Natural killer cell (primary cell): ENCODE measurements at regions of chr11 and their contacts with region 1.

Region 1: DNA sequence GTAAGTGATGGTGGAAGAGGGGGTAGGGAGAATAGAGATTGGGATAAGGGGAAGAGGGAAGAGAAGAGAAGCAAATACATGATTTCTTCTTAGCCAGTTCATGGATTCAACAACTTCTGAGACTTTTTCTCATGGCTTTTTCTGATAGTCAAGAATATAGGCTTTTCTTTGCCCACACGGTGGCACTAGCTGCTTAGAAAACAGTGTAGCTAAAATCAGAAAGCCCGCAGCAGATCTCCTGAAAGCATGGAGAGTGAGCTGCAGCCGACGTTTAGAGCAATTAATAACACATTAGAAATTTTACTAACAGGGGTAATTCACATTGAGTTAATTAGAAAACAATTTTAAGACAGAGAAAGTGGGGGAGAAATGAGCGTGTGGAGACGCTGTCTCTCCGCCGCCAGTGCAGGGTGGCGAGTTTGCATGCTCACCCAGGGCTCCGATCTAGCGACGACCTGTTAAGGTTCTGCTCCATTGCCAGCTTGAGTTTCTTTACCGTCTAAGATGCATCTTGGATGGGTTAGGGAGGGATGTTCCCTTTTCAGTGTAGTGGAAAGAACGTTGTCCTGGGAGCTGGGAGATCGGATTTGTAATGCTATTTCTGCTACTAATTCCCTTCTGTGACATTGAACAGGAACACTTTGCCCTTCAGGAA is 3.3 kb upstream of the RAG1 start:
- DNase-seq: peak; percentile 35 to 75
- ATAC-seq: peak; percentile 64 to 92 (median 90)
- H3K4me3 ChIP-seq: peak overlapping the region; percentile 1
- H3K4me3 Mint-ChIP-seq: peak overlapping the region; percentile 91
- H3K27ac ChIP-seq: no peak overlapping the region
- H3K27ac Mint-ChIP-seq: peak overlapping the region in 1 of 2 donors; percentile 28
- H3K4me1 ChIP-seq: peaks cover 12% of the 10 kb centered on the region
- H3K4me1 Mint-ChIP-seq: peaks cover 28 to 30% of the 10 kb centered on the region in 2 donors
- H3K27me3 ChIP-seq: peaks cover 2% of the 10 kb centered on the region
- H3K27me3 Mint-ChIP-seq: peaks cover 11 to 16% of the 10 kb centered on the region in 2 donors
- CTCF ChIP-seq: peak; percentile 85

Region 2: DNA sequence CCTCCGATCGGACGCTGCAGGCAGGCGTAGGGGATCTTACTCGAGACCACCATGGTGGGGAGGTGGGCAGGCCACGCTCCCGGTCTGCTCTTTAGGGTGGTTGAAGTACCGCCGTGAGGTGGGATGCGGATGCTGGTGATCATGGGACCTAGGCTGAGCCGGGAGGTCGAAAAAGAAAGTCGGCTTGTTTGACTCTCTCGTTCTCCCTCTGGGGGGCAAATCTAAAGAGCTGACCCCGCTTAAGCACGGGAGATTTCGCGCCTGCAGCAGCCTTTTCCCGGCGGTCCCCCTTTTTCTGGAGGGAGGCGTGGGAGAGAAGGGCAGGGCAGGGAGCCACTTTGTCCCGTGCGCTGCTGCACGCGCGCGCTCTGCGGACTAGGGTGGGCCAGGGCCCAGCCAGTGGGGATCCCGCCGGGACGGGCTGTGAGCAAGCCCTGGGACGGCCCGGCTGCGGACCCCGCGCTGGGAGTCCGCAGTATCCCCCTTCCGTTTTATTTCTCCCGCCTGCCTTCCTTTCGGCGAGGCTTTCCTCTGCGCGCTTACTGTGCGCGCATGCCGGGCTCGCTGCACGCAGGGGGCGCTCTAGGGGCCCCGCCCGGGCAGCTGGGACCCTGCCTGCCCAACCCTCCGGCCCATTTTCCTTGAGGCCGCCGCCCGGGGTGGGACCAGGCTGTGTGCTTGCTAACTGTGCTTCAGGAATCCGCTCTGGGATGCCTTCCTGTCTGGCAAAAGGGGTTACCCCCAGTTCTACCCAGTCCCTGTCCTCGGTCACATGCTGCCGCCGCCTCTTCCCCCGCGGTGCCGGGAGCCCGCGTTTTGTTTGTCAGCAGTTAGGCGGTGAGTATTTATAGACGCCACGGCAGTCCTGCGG is 187.4 kb before region 1 on chr11:
- intact Hi-C with region 1: no loop called
- DNase-seq: peak; percentile 69 to 76
- ATAC-seq: peak; percentile 63 to 82 (median 72)
- H3K4me3 ChIP-seq: peak overlapping the region; percentile 72
- H3K4me3 Mint-ChIP-seq: peak overlapping the region; percentile 91
- H3K27ac ChIP-seq: peak overlapping the region; percentile 85
- H3K27ac Mint-ChIP-seq: peak overlapping the region; percentile 90 to 93
- H3K4me1 ChIP-seq: peaks cover 44% of the 10 kb centered on the region
- H3K4me1 Mint-ChIP-seq: peaks cover 60 to 63% of the 10 kb centered on the region in 2 donors
- H3K27me3 ChIP-seq: no peaks in the 10 kb centered on the region
- H3K27me3 Mint-ChIP-seq: no peaks in the 10 kb centered on the region
- CTCF ChIP-seq: peak; percentile 84

Region 3: DNA sequence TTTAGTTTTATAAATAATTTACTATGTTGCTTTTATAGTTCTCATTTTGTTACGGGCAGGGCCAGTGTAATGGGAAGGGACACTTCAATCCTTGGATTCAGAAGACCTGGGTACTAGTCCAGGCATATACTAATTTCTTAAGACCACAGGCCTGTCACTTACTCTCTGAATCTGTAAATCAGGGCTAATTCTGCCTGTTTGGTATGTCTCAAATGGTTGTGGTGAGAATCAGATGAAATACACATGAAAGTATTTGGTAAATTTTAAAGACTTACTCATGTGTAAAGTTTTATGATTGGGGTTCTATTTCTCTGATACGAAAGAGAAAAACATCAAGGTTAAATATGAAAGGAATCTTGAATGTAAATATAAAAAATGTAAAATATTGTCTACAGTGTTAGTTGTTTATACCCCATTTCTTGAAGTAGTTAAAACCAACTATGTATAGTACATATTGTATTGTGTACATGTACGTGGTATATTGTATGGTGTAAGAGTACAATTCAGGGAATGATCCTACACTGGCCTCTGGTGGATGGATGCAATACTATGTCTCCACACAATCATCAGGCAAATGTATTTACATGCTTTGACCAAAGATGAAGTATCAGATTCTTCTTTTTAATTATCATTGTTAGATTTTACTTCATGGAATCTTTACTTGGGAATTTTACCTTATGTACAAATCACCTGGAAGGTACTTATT is 58.1 kb after region 1 on chr11:
- intact Hi-C with region 1: loop called (anchors 1 kb)
- DNase-seq: peak in 1 of 2 donors; percentile 39
- ATAC-seq: peak; percentile 53 to 72 (median 64)
- H3K4me3 ChIP-seq: no peak overlapping the region
- H3K4me3 Mint-ChIP-seq: no peak overlapping the region
- H3K27ac ChIP-seq: no peak overlapping the region
- H3K27ac Mint-ChIP-seq: no peak overlapping the region
- H3K4me1 ChIP-seq: no peaks in the 10 kb centered on the region
- H3K4me1 Mint-ChIP-seq: peaks cover 0 to 9% of the 10 kb centered on the region in 2 donors
- H3K27me3 ChIP-seq: no peaks in the 10 kb centered on the region
- H3K27me3 Mint-ChIP-seq: peaks cover 6 to 9% of the 10 kb centered on the region in 2 donors
- CTCF ChIP-seq: peak; percentile 25

Region 4: GRCh38 chr11:36672813-36673450 is 108.4 kb after region 1 on chr11:
- intact Hi-C with region 1: loop called (anchors 1 kb)
- DNase-seq: peak in 1 of 2 donors; percentile 67
- ATAC-seq: no peak
- H3K4me3 ChIP-seq: no peak overlapping the region
- H3K4me3 Mint-ChIP-seq: no peak overlapping the region
- H3K27ac ChIP-seq: no peak overlapping the region
- H3K27ac Mint-ChIP-seq: no peak overlapping the region
- H3K4me1 ChIP-seq: no peaks in the 10 kb centered on the region
- H3K4me1 Mint-ChIP-seq: no peaks in the 10 kb centered on the region
- H3K27me3 ChIP-seq: no peaks in the 10 kb centered on the region
- H3K27me3 Mint-ChIP-seq: no peaks in the 10 kb centered on the region
- CTCF ChIP-seq: peak; percentile 98

Region 5: GRCh38 chr11:36746886-36747710 is 182.6 kb after region 1 on chr11:
- intact Hi-C with region 1: loop called (anchors 1 kb)
- DNase-seq: peak; percentile 76 to 93
- ATAC-seq: peak; percentile 100
- H3K4me3 ChIP-seq: no peak overlapping the region
- H3K4me3 Mint-ChIP-seq: no peak overlapping the region
- H3K27ac ChIP-seq: no peak overlapping the region
- H3K27ac Mint-ChIP-seq: no peak overlapping the region
- H3K4me1 ChIP-seq: no peaks in the 10 kb centered on the region
- H3K4me1 Mint-ChIP-seq: peaks cover 14 to 18% of the 10 kb centered on the region in 2 donors
- H3K27me3 ChIP-seq: no peaks in the 10 kb centered on the region
- H3K27me3 Mint-ChIP-seq: peaks cover 32 to 41% of the 10 kb centered on the region in 2 donors
- CTCF ChIP-seq: peak; percentile 97